Dorsolateral prefrontal cortex (tissue), 120 donors: ENCODE measurements at regions of chr16 and their contacts with region 1.

Region 1: DNA sequence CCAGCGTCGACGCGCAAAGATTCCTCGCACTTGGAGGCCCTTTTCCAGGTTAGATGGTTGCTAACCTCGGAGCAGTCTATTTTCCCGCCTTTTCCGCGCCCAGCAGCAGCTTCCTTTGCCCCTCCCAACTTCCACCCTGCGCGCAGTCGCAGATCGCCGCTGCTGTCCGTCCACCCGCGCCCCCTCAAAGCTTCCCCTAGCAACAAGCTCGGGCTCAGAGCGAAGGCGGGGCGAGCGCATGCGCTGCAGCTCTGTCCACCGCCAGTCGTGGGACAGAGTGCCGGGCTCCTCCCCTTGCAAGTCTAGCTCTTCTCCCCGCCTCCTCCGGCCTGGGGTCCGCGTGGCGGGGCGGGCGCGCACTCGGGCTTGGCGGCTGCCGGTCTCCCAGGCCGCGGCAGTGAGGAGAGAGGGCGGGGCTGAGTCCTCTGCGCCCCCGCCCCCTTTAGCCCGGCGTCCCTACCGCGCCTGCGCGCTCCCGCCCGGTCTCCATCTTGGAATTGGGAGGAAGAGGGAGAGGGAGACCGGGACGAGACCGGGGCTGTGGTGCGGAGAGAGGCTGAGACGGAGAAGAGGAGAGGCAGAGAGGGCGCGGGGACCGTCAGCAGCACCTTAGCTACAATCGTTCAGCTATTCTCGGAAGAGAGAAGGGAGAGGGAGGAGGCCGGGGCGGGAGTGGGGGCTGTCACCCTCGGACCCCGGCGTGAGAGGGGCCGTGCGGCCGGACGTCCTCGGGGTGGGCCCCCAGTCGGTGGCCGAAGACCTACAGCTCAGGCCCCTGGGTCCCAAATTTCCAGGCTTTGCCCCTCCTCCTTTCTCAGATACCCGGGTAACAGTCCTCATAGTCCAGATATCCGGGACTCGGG is at the start of gene TAOK2:
- DNase-seq: peak; percentile 98 to 100 (median 98)
- H3K4me3 ChIP-seq: peak within 1 kb of the TSS; percentile 68 to 100 (median 94)
- H3K27ac ChIP-seq: peak within 1 kb of the TSS; percentile 60 to 99 (median 93)
- H3K27me3 ChIP-seq: no peaks in the 10 kb centered on the region
- CTCF ChIP-seq: peak in 29 of 56 donors; percentile 9 to 52 (median 29)
- total RNA-seq, gene TAOK2: 58.7 to 87.3 (median 69.6) TPM

Region 2: GRCh38 chr16:29805378-29806098 is 168.1 kb before region 1 on chr16:
- intact Hi-C with region 1: loop called in 1 of 2 experiments (anchors 5 kb)
- DNase-seq: peak; percentile 95 to 98 (median 98)
- H3K4me3 ChIP-seq: peak overlapping the region; percentile 68 to 98 (median 90)
- H3K27ac ChIP-seq: peak overlapping the region; percentile 95 to 100 (median 99)
- H3K27me3 ChIP-seq: no peaks in the 10 kb centered on the region
- CTCF ChIP-seq: peak in 40 of 56 donors; percentile 1 to 58 (median 34)

Region 3: DNA sequence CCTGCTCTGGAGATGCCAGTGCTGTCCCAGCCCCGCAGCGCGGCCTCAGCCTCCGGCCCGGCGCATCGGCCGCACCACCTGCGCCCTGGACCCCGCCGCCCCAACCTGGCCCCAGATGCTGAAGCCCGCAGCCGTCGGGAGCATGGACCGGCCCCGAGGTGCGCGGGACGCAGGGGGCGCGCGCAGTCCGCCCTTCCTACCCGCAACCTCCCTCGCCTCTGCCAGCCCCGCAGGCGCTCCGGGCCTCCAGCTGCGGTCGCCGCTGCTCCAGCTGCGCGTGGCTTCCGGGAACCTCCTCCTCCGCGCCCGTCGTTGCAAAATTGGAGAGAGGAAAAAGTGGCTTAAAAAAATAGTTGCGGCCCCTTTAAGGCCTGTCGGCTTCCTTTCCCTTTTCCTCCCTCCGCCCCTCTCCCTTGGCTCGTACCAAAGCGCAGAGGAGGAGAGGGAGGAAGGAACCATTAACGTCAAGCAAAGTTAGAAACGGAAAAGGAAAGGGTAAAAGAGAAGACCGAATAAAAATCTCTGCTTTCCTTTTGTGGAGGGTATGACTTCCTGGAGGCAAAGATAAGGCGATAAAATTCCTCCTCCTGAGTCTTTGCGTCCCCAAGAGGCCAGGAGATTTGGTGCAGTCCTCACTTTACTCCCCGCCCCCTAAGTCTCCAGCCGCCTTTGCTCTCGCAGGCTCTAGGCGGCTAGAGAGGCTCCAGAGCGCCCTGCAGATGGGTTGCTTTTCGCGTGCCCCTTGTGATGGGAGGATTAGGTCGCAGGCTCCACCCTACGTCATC is 110.5 kb before region 1 on chr16 and contains the start of gene CDIPT:
- intact Hi-C with region 1: loop called (anchors 5 kb)
- DNase-seq: peak; percentile 83 to 97 (median 96)
- H3K4me3 ChIP-seq: peak within 1 kb of the TSS; percentile 64 to 100 (median 95)
- H3K27ac ChIP-seq: peak within 1 kb of the TSS; percentile 89 to 99 (median 97)
- H3K27me3 ChIP-seq: no peaks in the 10 kb centered on the region
- CTCF ChIP-seq: peak in 54 of 56 donors; percentile 29 to 84 (median 70)
- total RNA-seq, gene CDIPT: 63.9 to 118 (median 94.7) TPM

Region 4: GRCh38 chr16:29926005-29926710 is 47.5 kb before region 1 on chr16 and contains the start of gene KCTD13:
- intact Hi-C with region 1: loop called in 1 of 2 experiments (anchors 1 kb)
- DNase-seq: peak; percentile 74 to 93 (median 80)
- H3K4me3 ChIP-seq: peak within 1 kb of the TSS; percentile 57 to 100 (median 97)
- H3K27ac ChIP-seq: peak within 1 kb of the TSS; percentile 11 to 97 (median 92)
- H3K27me3 ChIP-seq: no peaks in the 10 kb centered on the region
- CTCF ChIP-seq: peak in 15 of 56 donors; percentile 5 to 43 (median 22)
- total RNA-seq, gene KCTD13: 38.6 to 87.0 (median 61.2) TPM

Region 5: GRCh38 chr16:29995911-29996772 is 22.5 kb after region 1 on chr16 and contains the start of gene INO80E:
- intact Hi-C with region 1: loop called (anchors 1 kb)
- DNase-seq: peak; percentile 98 to 100 (median 99)
- H3K4me3 ChIP-seq: peak within 1 kb of the TSS; percentile 64 to 100 (median 95)
- H3K27ac ChIP-seq: peak within 1 kb of the TSS; percentile 87 to 99 (median 98)
- H3K27me3 ChIP-seq: no peaks in the 10 kb centered on the region
- CTCF ChIP-seq: peak in 39 of 56 donors; percentile 1 to 56 (median 27)
- total RNA-seq, gene INO80E: 38.6 to 73.9 (median 52.6) TPM

Region 6: DNA sequence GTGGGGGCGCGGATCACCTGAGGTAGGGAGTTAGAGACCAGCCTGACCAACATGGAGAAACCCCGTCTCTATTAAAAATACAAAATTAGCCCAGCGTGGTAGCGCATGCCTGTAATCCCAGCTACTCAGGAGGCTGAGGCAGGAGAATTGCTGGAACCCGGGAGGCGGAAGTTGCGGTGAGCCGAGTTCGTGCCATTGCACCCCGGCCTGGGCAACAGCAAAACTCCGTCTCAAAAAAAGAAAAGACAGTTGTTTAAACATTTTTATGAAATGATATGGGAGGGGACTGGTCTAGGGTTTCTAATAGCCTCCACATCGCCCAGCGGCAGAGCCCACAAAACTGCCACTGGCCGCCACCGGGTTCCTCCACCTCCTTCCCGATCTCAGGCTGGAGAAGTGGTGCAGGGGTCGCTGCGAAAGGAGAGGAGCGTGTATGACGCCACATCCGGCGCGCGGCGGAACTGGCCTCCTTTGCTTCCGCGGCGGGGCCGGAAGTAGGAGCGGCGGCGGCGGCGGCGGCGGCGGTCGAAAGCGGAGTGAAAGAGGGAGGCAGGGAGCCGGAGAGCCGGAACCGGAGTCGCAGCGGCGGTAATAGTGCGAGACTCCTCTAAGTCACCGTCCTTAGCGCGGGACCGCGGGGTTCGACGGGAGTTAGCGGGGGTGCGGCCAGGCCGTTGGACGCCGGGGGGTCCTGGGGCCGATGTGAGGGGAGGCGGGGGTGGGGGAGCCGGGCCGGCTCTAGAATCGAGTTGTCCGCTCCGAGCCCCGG is 102.1 kb after region 1 on chr16 and contains the start of gene PPP4C:
- intact Hi-C with region 1: no loop called
- DNase-seq: peak; percentile 81 to 94 (median 90)
- H3K4me3 ChIP-seq: peak within 1 kb of the TSS; percentile 71 to 100 (median 96)
- H3K27ac ChIP-seq: peak within 1 kb of the TSS; percentile 58 to 97 (median 89)
- H3K27me3 ChIP-seq: no peaks in the 10 kb centered on the region
- CTCF ChIP-seq: peak in 50 of 56 donors; percentile 11 to 64 (median 40)
- total RNA-seq, gene PPP4C: 23.6 to 41.9 (median 31.5) TPM

Region 7: GRCh38 chr16:30166202-30166902 is 192.7 kb after region 1 on chr16:
- intact Hi-C with region 1: no loop called
- DNase-seq: no peak
- H3K4me3 ChIP-seq: no peak overlapping the region
- H3K27ac ChIP-seq: no peak overlapping the region
- H3K27me3 ChIP-seq: no peaks in the 10 kb centered on the region
- CTCF ChIP-seq: no peak